Naive thymus-derived CD4-positive, alpha-beta T cell (primary cell): ENCODE measurements at regions of chr13 and their contacts with region 1.

Region 1: GRCh38 chr13:89490661-89491060 is 1819.5 kb downstream of the SLITRK5 start:
- DNase-seq: no peak
- ATAC-seq: no peak
- H3K4me3 ChIP-seq: no peak overlapping the region
- H3K4me3 Mint-ChIP-seq: no peak overlapping the region
- H3K27ac ChIP-seq: no peak overlapping the region
- H3K27ac Mint-ChIP-seq: no peak overlapping the region
- H3K4me1 ChIP-seq: no peaks in the 10 kb centered on the region
- H3K4me1 Mint-ChIP-seq: no peaks in the 10 kb centered on the region
- H3K27me3 ChIP-seq: no peaks in the 10 kb centered on the region
- H3K27me3 Mint-ChIP-seq: no peaks in the 10 kb centered on the region

Region 2: DNA sequence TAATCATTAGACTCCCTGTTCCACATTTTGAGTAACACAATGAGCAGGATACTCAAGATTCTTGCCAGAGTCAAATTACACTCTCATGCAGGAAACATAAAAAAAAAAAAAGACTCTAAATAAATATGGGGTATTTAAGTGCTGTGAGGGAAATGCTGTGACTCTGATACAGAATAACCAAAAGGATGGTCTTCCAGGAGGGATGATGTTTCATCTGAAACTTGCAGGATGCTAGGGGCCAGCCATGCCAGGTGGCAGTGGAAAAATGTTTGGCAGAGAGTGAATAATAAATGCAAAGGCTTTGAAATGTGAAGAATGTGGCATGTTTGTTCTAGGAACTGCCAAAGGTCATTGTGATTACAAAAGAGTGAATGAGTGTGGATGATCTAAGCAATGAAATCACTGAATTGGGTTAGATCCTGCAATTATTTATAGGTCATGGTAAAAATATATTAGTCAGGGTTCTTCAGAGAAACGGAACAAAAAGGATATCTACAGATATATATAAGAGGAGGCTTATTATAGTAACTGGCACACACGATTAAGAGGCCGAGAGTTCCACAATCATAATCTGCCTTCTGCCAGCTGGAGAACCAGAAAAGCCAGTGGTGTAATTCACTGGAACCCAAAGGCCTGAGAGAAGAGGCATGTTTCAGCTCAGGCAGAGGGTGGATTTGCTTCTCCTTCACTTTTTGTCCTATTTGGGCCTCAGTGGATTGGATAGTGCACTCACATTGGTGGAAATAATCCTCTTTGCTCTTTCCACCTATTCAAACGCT is 24.1 kb after region 1 on chr13:
- CTCF ChIA-PET with region 1: no interaction called
- POLR2A ChIA-PET with region 1: no interaction called
- intact Hi-C with region 1: no loop called
- DNase-seq: no peak
- ATAC-seq: no peak
- H3K4me3 ChIP-seq: no peak overlapping the region
- H3K4me3 Mint-ChIP-seq: no peak overlapping the region
- H3K27ac ChIP-seq: no peak overlapping the region
- H3K27ac Mint-ChIP-seq: no peak overlapping the region
- H3K4me1 ChIP-seq: no peaks in the 10 kb centered on the region
- H3K4me1 Mint-ChIP-seq: no peaks in the 10 kb centered on the region
- H3K27me3 ChIP-seq: no peaks in the 10 kb centered on the region
- H3K27me3 Mint-ChIP-seq: no peaks in the 10 kb centered on the region

Region 3: DNA sequence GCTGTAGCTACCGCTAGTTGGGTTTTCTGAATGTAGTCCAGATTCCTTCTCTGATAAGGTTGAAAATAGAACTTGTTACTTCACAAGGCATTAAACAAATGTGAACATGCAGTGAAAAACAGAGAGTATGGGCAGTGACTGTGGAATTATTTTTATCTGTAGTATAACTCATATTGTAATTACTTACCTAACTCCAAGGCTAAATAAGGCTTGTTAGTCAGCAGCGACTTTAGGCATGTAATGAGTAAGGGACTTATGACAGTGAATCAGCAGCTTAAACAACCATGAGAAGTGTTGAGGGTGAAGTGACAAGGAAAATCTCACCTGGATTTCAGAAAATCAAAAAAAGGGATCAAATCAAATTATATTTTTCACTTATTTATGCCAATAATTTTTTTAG is 137.3 kb after region 1 on chr13:
- CTCF ChIA-PET with region 1: no interaction called
- POLR2A ChIA-PET with region 1: no interaction called
- intact Hi-C with region 1: loop called in 1 of 2 experiments (anchors 10 kb)
- DNase-seq: no peak
- ATAC-seq: no peak
- H3K4me3 ChIP-seq: no peak overlapping the region
- H3K4me3 Mint-ChIP-seq: no peak overlapping the region
- H3K27ac ChIP-seq: no peak overlapping the region
- H3K27ac Mint-ChIP-seq: no peak overlapping the region
- H3K4me1 ChIP-seq: no peaks in the 10 kb centered on the region
- H3K4me1 Mint-ChIP-seq: no peaks in the 10 kb centered on the region
- H3K27me3 ChIP-seq: no peaks in the 10 kb centered on the region
- H3K27me3 Mint-ChIP-seq: no peaks in the 10 kb centered on the region